CD4-positive, alpha-beta memory T cell (primary cell): ENCODE measurements at regions of chr1 and their contacts with region 1.

Region 1: GRCh38 chr1:54996359-54996868 is 2.3 kb upstream of the BSND start:
- DNase-seq: peak; percentile 76 to 83 (median 81)
- H3K4me3 ChIP-seq: peak overlapping the region in 1 of 2 donors; percentile 41
- H3K4me3 Mint-ChIP-seq: peak overlapping the region; percentile 50 to 80 (median 75)
- H3K27ac ChIP-seq: peak overlapping the region; percentile 23
- H3K27ac Mint-ChIP-seq: peak overlapping the region; percentile 84 to 95 (median 93)
- H3K4me1 ChIP-seq: peaks cover 22% of the 10 kb centered on the region
- H3K4me1 Mint-ChIP-seq: peaks cover 21 to 29% (median 21%) of the 10 kb centered on the region in 4 donors
- H3K27me3 ChIP-seq: peaks cover 7% of the 10 kb centered on the region
- H3K27me3 Mint-ChIP-seq: peaks cover 15 to 28% of the 10 kb centered on the region in 2 donors

Region 2: DNA sequence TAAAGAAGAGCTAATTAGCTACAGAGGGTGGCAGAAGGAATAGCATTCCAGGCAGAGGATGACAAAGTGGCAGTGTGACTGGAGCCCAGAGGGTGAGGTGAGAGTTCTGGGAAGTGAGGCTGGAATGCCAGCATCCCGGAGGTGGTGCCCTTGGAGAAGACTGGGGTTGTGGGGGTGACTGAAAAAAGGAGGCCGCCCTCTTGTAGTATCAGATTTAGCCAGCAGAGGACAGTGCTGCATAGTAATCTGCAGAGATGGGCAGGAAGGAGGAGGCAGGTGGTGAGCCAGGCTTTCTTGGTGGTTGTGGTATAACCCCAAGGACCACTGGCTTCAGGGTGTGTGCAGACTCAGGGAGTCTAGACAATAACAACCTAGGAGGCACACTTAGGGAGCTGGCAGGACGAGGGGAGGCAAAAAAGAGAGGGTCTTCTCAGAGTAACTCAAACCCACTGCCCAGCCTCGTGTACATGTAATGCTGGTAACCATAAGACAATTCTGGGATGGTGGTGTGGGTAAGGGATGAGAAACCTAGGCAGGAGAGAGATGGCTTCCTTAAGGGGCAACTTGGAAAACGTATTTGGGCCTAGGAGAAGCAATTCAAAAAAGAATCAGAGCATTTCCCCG is 324.3 kb before region 1 on chr1:
- CTCF ChIA-PET with region 1: no interaction called
- POLR2A ChIA-PET with region 1: no interaction called
- intact Hi-C with region 1: loop called (anchors 1 kb)
- DNase-seq: peak; percentile 51 to 66 (median 58)
- H3K4me3 ChIP-seq: no peak overlapping the region
- H3K4me3 Mint-ChIP-seq: no peak overlapping the region
- H3K27ac ChIP-seq: no peak overlapping the region
- H3K27ac Mint-ChIP-seq: peak overlapping the region in 2 of 7 donors; percentile 46 to 56
- H3K4me1 ChIP-seq: no peaks in the 10 kb centered on the region
- H3K4me1 Mint-ChIP-seq: peaks cover 1 to 6% (median 4%) of the 10 kb centered on the region in 4 donors
- H3K27me3 ChIP-seq: no peaks in the 10 kb centered on the region
- H3K27me3 Mint-ChIP-seq: peaks cover 0 to 6% of the 10 kb centered on the region in 2 donors

Region 3: GRCh38 chr1:54959241-54959640 is 37.2 kb before region 1 on chr1:
- CTCF ChIA-PET with region 1: interaction called, 337 read pairs
- POLR2A ChIA-PET with region 1: no interaction called
- intact Hi-C with region 1: no loop called
- DNase-seq: no peak
- H3K4me3 ChIP-seq: no peak overlapping the region
- H3K4me3 Mint-ChIP-seq: no peak overlapping the region
- H3K27ac ChIP-seq: no peak overlapping the region
- H3K27ac Mint-ChIP-seq: no peak overlapping the region
- H3K4me1 ChIP-seq: no peaks in the 10 kb centered on the region
- H3K4me1 Mint-ChIP-seq: no peaks in the 10 kb centered on the region
- H3K27me3 ChIP-seq: no peaks in the 10 kb centered on the region
- H3K27me3 Mint-ChIP-seq: peaks cover 0 to 2% of the 10 kb centered on the region in 2 donors